BJ (cell line): ENCODE measurements at regions of chr3 and their contacts with region 1.

Region 1: DNA sequence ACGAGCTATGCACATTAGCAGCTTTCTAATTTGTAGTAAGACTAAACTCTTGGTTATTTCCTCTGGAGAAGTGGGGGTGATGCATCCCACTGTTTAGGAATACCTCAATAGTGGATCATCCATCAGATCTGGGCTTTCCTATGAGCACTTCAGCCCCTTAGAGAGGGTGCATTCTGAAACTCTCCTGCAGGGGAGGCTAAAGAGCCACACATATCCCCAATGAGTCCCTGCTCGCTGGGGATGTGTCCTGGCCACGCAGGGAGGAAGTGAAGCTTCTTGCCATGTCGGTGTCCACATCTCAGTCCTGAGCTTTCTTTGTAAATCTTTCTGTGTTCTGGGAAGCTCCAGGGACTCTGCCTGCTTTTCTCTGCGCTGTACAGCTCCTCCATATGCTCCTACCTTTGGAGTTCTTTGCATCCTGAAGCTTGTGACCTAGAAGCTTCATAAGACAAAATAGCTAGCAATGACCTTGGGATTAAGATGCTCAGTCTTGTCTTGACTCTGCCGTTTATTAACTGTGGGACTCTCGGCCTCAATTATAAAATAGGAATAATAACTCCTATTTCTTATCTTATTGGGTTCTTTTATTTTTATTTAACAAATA is 28.3 kb upstream of the MASP1 start:
- DNase-seq: peak; percentile 42
- H3K4me3 ChIP-seq: no peak overlapping the region
- H3K27me3 ChIP-seq: no peaks in the 10 kb centered on the region
- CTCF ChIP-seq: peak; percentile 96

Region 2: DNA sequence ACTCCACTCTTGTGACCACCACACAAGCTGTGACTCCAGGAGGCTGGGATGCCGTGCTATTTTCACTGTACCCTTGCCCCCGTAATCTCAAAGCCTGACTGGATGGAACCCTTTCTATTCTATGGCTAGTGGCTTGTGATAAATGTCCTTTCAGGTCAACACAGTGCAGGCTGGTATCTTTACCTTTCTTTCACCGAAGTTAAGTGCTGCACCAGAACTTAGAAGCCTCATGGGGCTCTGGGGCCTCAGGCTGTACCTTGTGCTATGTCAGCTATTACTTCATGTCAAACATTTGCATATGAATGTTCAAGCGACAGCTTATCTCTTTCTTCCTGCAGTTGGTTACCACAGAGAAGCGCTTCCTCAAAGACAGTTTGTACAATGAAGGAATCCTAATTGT is 247.3 kb before region 1 on chr3:
- CTCF ChIA-PET with region 1: no interaction called
- POLR2A ChIA-PET with region 1: no interaction called
- DNase-seq: no peak
- H3K4me3 ChIP-seq: no peak overlapping the region
- H3K27me3 ChIP-seq: no peaks in the 10 kb centered on the region
- CTCF ChIP-seq: no peak

Region 3: DNA sequence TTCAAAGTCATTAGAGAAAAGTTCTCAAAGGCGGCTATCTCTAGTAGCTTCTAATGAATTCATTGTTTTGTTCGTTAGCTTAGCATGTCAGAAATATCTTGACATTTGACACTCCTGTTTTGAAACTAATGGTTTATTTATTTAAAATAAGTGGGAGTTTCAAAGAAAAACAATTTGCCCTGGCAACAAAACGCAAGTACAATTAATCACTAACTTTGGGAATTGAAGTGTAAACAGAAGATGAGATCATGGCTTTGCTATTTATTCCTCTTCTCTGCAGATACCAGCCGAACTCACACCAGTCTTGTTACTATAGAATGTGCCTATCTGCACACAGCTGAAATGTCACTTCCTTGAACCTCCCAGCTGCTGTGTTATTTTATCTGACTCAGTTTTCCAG is 55.8 kb before region 1 on chr3:
- CTCF ChIA-PET with region 1: interaction called, 26 read pairs
- POLR2A ChIA-PET with region 1: no interaction called
- DNase-seq: peak; percentile 73
- H3K4me3 ChIP-seq: no peak overlapping the region
- H3K27me3 ChIP-seq: no peaks in the 10 kb centered on the region
- CTCF ChIP-seq: no peak

Region 4: GRCh38 chr3:187305881-187306280 is 13.9 kb before region 1 on chr3:
- CTCF ChIA-PET with region 1: interaction called, 24 read pairs
- POLR2A ChIA-PET with region 1: no interaction called
- DNase-seq: no peak
- H3K4me3 ChIP-seq: no peak overlapping the region
- H3K27me3 ChIP-seq: no peaks in the 10 kb centered on the region
- CTCF ChIP-seq: no peak

Region 5: DNA sequence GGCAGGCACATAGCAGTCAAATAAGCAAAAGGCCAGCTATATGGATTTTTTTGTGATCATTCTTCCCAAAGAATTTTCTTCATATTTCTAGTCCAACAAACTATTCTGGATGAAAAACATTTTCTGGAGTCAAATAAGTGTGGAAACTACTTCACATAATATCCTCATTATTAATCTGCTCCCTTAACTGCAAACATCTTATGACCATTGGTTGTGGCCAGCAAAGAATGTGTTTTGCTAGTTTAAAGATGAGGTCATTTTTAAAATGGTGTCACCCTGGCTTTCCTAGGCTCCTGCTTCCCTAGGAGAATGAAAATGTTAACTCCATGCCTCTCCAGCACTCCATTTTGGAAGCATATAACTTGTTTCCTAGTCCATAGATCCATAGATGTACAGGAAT is 231.6 kb after region 1 on chr3:
- CTCF ChIA-PET with region 1: interaction called, 15 read pairs
- POLR2A ChIA-PET with region 1: no interaction called
- DNase-seq: peak; percentile 63
- H3K4me3 ChIP-seq: no peak overlapping the region
- H3K27me3 ChIP-seq: no peaks in the 10 kb centered on the region
- CTCF ChIP-seq: no peak

Region 6: GRCh38 chr3:187628169-187628568 is 308.4 kb after region 1 on chr3:
- CTCF ChIA-PET with region 1: interaction called, 22 read pairs
- POLR2A ChIA-PET with region 1: no interaction called
- DNase-seq: no peak
- H3K4me3 ChIP-seq: no peak overlapping the region
- H3K27me3 ChIP-seq: no peaks in the 10 kb centered on the region
- CTCF ChIP-seq: no peak

Region 7: GRCh38 chr3:187686621-187687273 is 366.9 kb after region 1 on chr3:
- CTCF ChIA-PET with region 1: interaction called, 543 read pairs
- POLR2A ChIA-PET with region 1: no interaction called
- DNase-seq: no peak
- H3K4me3 ChIP-seq: no peak overlapping the region
- H3K27me3 ChIP-seq: peaks cover 6% of the 10 kb centered on the region
- CTCF ChIP-seq: no peak

Region 8: GRCh38 chr3:187714404-187714979 is 394.7 kb after region 1 on chr3:
- CTCF ChIA-PET with region 1: interaction called, 53 read pairs
- POLR2A ChIA-PET with region 1: no interaction called
- DNase-seq: no peak
- H3K4me3 ChIP-seq: no peak overlapping the region
- H3K27me3 ChIP-seq: no peaks in the 10 kb centered on the region; the same call in 1 of the 2 replicates
- CTCF ChIP-seq: peak; percentile 87